CD8-positive, alpha-beta T cell (primary cell): ENCODE measurements at regions of chr1 and their contacts with region 1.

Region 1: GRCh38 chr1:92994105-92994712 is 32.9 kb upstream of the DIPK1A start:
- DNase-seq: peak; percentile 30 to 90 (median 76)
- ATAC-seq: peak; percentile 91
- H3K4me3 ChIP-seq: no peak overlapping the region
- H3K4me3 Mint-ChIP-seq: no peak overlapping the region
- H3K27ac ChIP-seq: no peak overlapping the region
- H3K27ac Mint-ChIP-seq: peak overlapping the region; percentile 11
- H3K4me1 ChIP-seq: peaks cover 34% of the 10 kb centered on the region
- H3K4me1 Mint-ChIP-seq: peaks cover 45% of the 10 kb centered on the region
- H3K27me3 ChIP-seq: no peaks in the 10 kb centered on the region
- H3K27me3 Mint-ChIP-seq: no peaks in the 10 kb centered on the region
- CTCF ChIP-seq: peak; percentile 77

Region 2: GRCh38 chr1:92872719-92873118 is 121.5 kb before region 1 on chr1:
- CTCF ChIA-PET with region 1: interaction called, 28 read pairs
- POLR2A ChIA-PET with region 1: no interaction called
- intact Hi-C with region 1: no loop called
- DNase-seq: no peak
- ATAC-seq: no peak
- H3K4me3 ChIP-seq: no peak overlapping the region
- H3K4me3 Mint-ChIP-seq: no peak overlapping the region
- H3K27ac ChIP-seq: no peak overlapping the region
- H3K27ac Mint-ChIP-seq: no peak overlapping the region
- H3K4me1 ChIP-seq: peaks cover 17% of the 10 kb centered on the region
- H3K4me1 Mint-ChIP-seq: peaks cover 30% of the 10 kb centered on the region
- H3K27me3 ChIP-seq: no peaks in the 10 kb centered on the region
- H3K27me3 Mint-ChIP-seq: no peaks in the 10 kb centered on the region
- CTCF ChIP-seq: no peak

Region 3: DNA sequence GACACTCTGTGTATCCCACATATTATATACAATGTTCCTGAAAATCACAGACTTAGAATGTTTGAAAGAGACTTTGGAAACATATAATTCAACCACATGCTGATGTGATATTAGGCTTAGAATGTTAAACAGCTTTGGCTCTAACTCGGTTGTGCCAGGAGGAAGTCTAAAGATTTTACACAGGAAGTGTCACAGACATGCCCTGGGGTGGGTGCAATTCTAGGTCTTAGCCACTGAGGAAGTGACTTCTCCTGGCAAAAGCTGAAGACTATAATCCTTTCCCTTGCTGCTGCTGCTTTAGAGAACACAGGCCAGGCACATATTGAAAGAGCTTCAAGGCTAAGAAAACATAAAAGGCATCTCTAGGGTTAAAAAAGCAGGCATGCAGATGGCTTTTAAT is 111.4 kb before region 1 on chr1:
- CTCF ChIA-PET with region 1: interaction called, 25 read pairs
- POLR2A ChIA-PET with region 1: interaction called, 3 read pairs
- intact Hi-C with region 1: no loop called
- DNase-seq: peak in 8 of 9 experiments; percentile 30 to 81 (median 56)
- ATAC-seq: peak; percentile 94
- H3K4me3 ChIP-seq: no peak overlapping the region
- H3K4me3 Mint-ChIP-seq: peak overlapping the region; percentile 42
- H3K27ac ChIP-seq: peak overlapping the region; percentile 3 to 80
- H3K27ac Mint-ChIP-seq: peak overlapping the region; percentile 96
- H3K4me1 ChIP-seq: peaks cover 19% of the 10 kb centered on the region
- H3K4me1 Mint-ChIP-seq: peaks cover 43% of the 10 kb centered on the region
- H3K27me3 ChIP-seq: no peaks in the 10 kb centered on the region
- H3K27me3 Mint-ChIP-seq: no peaks in the 10 kb centered on the region
- CTCF ChIP-seq: no peak

Region 4: GRCh38 chr1:92951141-92951582 is 43.0 kb before region 1 on chr1:
- CTCF ChIA-PET with region 1: interaction called, 18 read pairs
- POLR2A ChIA-PET with region 1: interaction called, 4 read pairs
- intact Hi-C with region 1: loop called (anchors 10 kb)
- DNase-seq: peak in 2 of 9 experiments; percentile 39 to 62
- ATAC-seq: peak; percentile 77
- H3K4me3 ChIP-seq: no peak overlapping the region
- H3K4me3 Mint-ChIP-seq: no peak overlapping the region
- H3K27ac ChIP-seq: peak overlapping the region in 1 of 2 experiments; percentile 4
- H3K27ac Mint-ChIP-seq: no peak overlapping the region
- H3K4me1 ChIP-seq: peaks cover 38% of the 10 kb centered on the region
- H3K4me1 Mint-ChIP-seq: peaks cover 39% of the 10 kb centered on the region
- H3K27me3 ChIP-seq: no peaks in the 10 kb centered on the region
- H3K27me3 Mint-ChIP-seq: no peaks in the 10 kb centered on the region
- CTCF ChIP-seq: no peak

Region 5: DNA sequence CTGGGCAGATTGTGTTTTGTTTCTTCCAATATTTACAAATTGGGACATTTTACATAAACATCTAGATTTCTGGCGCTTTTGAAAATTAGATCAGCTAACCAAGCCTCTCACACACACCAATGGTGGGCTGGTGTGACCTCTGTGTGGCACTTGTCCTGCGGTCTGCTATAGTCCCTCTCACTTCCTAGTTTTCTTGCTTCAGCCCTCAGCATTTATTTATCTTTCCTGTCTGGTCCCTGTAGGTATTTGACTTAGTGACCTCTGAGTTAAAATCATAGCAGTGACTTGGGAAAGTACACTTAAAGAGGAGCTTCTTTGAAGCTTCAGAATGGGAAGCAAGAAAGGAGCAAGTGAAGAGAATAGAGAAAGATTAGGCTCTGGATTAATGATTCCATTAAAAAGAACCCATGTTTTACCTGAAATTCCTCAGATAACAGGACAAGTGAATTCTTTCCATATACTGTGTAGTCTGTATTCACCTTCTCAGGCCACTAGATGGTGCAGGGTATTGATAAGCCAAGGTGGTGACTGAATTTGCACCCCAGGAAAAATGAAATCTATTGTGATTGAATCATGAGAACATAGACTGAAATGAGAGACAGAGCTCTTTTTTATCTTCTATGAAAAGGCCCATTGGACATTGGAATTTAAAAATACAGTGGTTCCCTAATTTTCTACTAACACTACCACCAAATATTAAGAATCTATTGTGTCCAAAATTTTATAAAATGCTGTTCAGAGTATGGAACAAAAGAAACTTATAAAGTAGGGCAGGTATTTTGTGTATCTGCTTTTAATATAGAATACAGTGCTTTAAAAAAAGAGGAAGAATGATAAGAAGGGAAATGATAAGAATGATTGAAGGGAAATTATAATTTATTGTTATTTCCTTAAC is 25.8 kb before region 1 on chr1:
- CTCF ChIA-PET with region 1: interaction called, 217 read pairs
- POLR2A ChIA-PET with region 1: interaction called, 59 read pairs
- intact Hi-C with region 1: loop called (anchors 1 kb)
- DNase-seq: peak in 4 of 9 experiments; percentile 22 to 72 (median 43)
- ATAC-seq: peak; percentile 59
- H3K4me3 ChIP-seq: no peak overlapping the region
- H3K4me3 Mint-ChIP-seq: no peak overlapping the region
- H3K27ac ChIP-seq: no peak overlapping the region
- H3K27ac Mint-ChIP-seq: no peak overlapping the region
- H3K4me1 ChIP-seq: peaks cover 37% of the 10 kb centered on the region
- H3K4me1 Mint-ChIP-seq: peaks cover 20% of the 10 kb centered on the region
- H3K27me3 ChIP-seq: no peaks in the 10 kb centered on the region
- H3K27me3 Mint-ChIP-seq: no peaks in the 10 kb centered on the region
- CTCF ChIP-seq: peak; percentile 84

Region 6: DNA sequence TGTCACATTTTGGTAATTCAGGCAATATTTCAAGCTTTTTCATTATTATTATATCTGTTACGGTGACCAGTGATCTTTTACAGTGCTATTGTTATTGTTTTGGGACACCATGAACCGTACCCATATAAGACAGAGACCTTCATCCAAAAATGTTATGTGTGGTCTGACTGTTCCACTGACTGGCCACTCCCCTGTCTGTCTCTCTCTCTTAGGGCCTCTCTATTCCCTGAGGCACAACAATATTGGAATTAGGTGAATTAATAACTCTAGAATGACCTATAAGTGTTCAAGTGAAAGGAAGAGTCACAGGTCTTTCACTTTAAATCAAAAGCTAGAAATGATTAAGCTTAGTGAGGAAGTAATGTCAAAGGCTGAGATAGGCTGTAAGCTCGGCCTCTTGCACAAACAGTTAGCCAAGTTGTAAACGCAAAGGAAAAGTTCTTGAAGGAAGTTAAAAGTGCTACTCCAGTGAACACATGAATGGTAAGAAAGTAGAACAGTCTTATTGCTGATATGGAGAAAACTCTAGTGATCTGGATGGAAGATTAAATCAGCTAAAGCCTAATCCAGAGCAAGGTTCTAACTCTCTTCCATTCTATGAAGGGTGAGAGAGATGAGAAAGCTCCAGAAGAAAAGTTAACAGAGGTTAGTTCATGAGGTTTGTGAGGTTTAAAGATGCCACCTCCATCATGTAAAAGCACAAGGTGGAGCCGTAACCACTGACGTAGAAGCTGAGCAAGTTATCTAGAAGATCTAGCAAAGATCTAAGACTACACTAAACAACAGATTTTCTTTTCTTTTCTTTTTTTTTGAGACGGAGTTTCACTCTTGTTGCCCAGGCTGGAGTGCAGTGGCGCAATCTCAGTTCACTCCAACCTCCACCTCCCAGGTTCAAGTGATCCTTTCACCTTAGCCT is 13.2 kb before region 1 on chr1:
- CTCF ChIA-PET with region 1: interaction called, 56 read pairs
- POLR2A ChIA-PET with region 1: interaction called, 10 read pairs
- intact Hi-C with region 1: loop called in 1 of 2 experiments (anchors 1 kb)
- DNase-seq: peak; percentile 20 to 93 (median 48)
- ATAC-seq: peak; percentile 93
- H3K4me3 ChIP-seq: peak overlapping the region in 1 of 2 experiments; percentile 12
- H3K4me3 Mint-ChIP-seq: peak overlapping the region; percentile 66
- H3K27ac ChIP-seq: peak overlapping the region; percentile 72 to 93
- H3K27ac Mint-ChIP-seq: peak overlapping the region; percentile 96
- H3K4me1 ChIP-seq: peaks cover 23% of the 10 kb centered on the region
- H3K4me1 Mint-ChIP-seq: peaks cover 25% of the 10 kb centered on the region
- H3K27me3 ChIP-seq: no peaks in the 10 kb centered on the region
- H3K27me3 Mint-ChIP-seq: no peaks in the 10 kb centered on the region
- CTCF ChIP-seq: no peak